HEK293 (cell line): ENCODE measurements at regions of chr2 and their contacts with region 1.

Region 1: GRCh38 chr2:174827371-174828369 is 63.4 kb upstream of the CHRNA1 start:
- H3K4me3 ChIP-seq: no peak overlapping the region
- H3K27ac ChIP-seq: no peak overlapping the region
- H3K4me1 ChIP-seq: no peaks in the 10 kb centered on the region
- CTCF ChIP-seq: no peak

Region 2: DNA sequence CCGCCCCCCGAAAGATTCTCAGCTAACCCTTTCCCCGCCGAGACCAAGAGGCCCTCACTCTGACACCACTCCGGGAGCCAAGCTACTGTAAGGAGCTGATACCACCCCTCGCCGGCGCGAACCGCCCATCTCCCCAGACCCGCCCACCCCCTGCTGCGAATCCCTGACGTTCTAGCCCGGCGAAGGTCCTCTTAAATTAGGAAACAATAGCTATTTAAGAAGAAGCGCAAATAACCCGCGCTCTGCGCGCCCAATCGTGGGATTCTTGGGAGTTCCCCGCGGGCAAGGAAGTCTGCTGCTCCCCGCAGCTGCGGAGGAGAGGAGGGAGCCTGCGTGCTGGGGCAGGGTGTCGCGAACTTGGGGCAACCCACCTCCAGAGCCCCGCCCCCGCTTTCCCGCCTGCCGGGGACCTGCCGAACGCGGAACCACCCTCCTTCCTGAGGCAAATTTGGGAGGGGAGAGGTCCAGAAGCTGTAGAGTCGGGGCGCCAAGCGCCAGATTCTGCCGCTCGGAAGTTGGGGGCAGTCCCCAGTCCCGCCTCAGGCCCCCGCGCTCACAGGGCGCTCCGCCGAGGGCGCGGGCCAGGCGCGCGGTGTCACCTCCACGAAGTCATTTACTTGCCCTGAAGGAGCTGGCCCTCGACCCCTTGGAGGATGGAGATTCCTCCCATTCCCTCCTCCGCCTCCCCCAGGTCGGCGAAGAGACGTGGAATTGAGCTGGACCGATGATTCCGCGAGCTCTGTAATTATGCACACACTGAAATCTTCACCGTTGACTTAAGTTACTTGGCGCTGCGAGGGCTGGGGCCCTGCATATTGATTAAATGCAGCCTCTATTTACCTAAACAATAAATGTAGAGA is 501.3 kb before region 1 on chr2:
- CTCF ChIA-PET with region 1: no interaction called
- POLR2A ChIA-PET with region 1: no interaction called
- H3K4me3 ChIP-seq: no peak overlapping the region
- H3K27ac ChIP-seq: no peak overlapping the region; the same call in 1 of the 2 replicates
- H3K4me1 ChIP-seq: no peaks in the 10 kb centered on the region
- CTCF ChIP-seq: no peak

Region 3: GRCh38 chr2:174796319-174796771 is 31.3 kb before region 1 on chr2:
- CTCF ChIA-PET with region 1: interaction called, 10 read pairs
- POLR2A ChIA-PET with region 1: no interaction called
- H3K4me3 ChIP-seq: no peak overlapping the region
- H3K27ac ChIP-seq: no peak overlapping the region
- H3K4me1 ChIP-seq: no peaks in the 10 kb centered on the region
- CTCF ChIP-seq: no peak

Region 4: GRCh38 chr2:174873471-174873870 is 45.8 kb after region 1 on chr2:
- CTCF ChIA-PET with region 1: no interaction called
- POLR2A ChIA-PET with region 1: no interaction called
- H3K4me3 ChIP-seq: no peak overlapping the region
- H3K27ac ChIP-seq: no peak overlapping the region
- H3K4me1 ChIP-seq: peaks cover 12% of the 10 kb centered on the region
- CTCF ChIP-seq: no peak

Region 5: GRCh38 chr2:174939046-174939445 is 111.4 kb after region 1 on chr2:
- CTCF ChIA-PET with region 1: no interaction called
- POLR2A ChIA-PET with region 1: no interaction called
- H3K4me3 ChIP-seq: no peak overlapping the region
- H3K27ac ChIP-seq: no peak overlapping the region
- H3K4me1 ChIP-seq: no peaks in the 10 kb centered on the region
- CTCF ChIP-seq: no peak